Calu3 (cell line): ENCODE measurements at regions of chr6 and their contacts with region 1.

Region 1: GRCh38 chr6:98845211-98846020 is 11.0 kb downstream of the POU3F2 start:
- DNase-seq: peak; percentile 83
- H3K4me3 Mint-ChIP-seq: peak overlapping the region; percentile 68
- H3K27ac Mint-ChIP-seq: no peak overlapping the region
- H3K4me1 Mint-ChIP-seq: peaks cover 8% of the 10 kb centered on the region
- H3K27me3 Mint-ChIP-seq: peaks cover 58% of the 10 kb centered on the region
- CTCF ChIP-seq: peak; percentile 76

Region 2: GRCh38 chr6:97497713-97498331 is 1347.6 kb before region 1 on chr6:
- CTCF ChIA-PET with region 1: no interaction called
- intact Hi-C with region 1: loop called (anchors 5 kb)
- DNase-seq: peak; percentile 65
- H3K4me3 Mint-ChIP-seq: no peak overlapping the region
- H3K27ac Mint-ChIP-seq: no peak overlapping the region
- H3K4me1 Mint-ChIP-seq: no peaks in the 10 kb centered on the region
- H3K27me3 Mint-ChIP-seq: no peaks in the 10 kb centered on the region
- CTCF ChIP-seq: peak; percentile 70

Region 3: DNA sequence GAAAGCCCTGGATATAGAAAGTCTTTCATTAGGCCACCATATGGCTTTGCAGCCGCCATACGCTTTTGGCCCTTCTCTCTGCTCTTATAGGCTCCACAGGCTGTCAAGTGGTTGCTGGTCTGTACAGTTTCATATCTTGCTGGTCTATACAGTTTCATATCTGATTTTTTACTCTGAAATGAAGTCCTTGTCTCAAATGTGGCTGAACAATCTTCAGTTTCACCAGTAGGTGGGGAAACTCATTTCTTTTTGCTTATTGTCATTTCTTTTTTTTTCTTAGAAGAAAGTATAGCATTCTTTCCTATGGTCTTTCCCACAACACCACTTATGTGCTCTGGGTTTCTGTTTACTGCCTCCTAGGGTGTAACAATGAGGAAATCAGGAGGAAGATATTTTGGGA is 791.0 kb before region 1 on chr6:
- CTCF ChIA-PET with region 1: no interaction called
- intact Hi-C with region 1: loop called (anchors 5 kb)
- DNase-seq: no peak
- H3K4me3 Mint-ChIP-seq: no peak overlapping the region
- H3K27ac Mint-ChIP-seq: no peak overlapping the region
- H3K4me1 Mint-ChIP-seq: no peaks in the 10 kb centered on the region
- H3K27me3 Mint-ChIP-seq: no peaks in the 10 kb centered on the region
- CTCF ChIP-seq: no peak

Region 4: GRCh38 chr6:98769544-98769943 is 75.9 kb before region 1 on chr6:
- CTCF ChIA-PET with region 1: interaction called, 3 read pairs
- intact Hi-C with region 1: loop called (anchors 1 kb)
- DNase-seq: peak; percentile 64
- H3K4me3 Mint-ChIP-seq: no peak overlapping the region
- H3K27ac Mint-ChIP-seq: no peak overlapping the region
- H3K4me1 Mint-ChIP-seq: peaks cover 5% of the 10 kb centered on the region
- H3K27me3 Mint-ChIP-seq: peaks cover 6% of the 10 kb centered on the region
- CTCF ChIP-seq: no peak

Region 5: DNA sequence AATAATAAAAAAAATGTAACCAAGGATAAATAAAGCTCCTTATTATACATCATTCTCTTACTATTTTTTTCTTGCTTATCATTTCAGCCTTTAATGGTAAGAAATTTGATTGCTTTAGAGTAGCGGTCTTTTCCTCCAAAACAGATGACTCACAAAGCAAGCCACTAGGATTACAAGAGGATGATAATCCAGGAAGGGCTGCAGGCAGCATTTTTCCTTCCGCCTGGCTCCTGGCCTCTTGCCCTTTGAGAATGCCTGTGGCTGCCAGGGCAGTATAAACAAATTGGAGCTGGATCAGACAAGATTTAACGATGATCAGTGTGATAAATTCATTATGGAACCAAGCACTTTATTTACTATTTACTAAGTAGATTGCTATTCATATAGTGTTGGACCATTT is 112.0 kb after region 1 on chr6:
- CTCF ChIA-PET with region 1: no interaction called
- intact Hi-C with region 1: no loop called
- DNase-seq: peak; percentile 57
- H3K4me3 Mint-ChIP-seq: no peak overlapping the region
- H3K27ac Mint-ChIP-seq: no peak overlapping the region
- H3K4me1 Mint-ChIP-seq: peaks cover 9% of the 10 kb centered on the region
- H3K27me3 Mint-ChIP-seq: no peaks in the 10 kb centered on the region
- CTCF ChIP-seq: no peak

Region 6: GRCh38 chr6:99241905-99242534 is 396.6 kb after region 1 on chr6:
- CTCF ChIA-PET with region 1: no interaction called
- intact Hi-C with region 1: loop called (anchors 10 kb)
- DNase-seq: peak; percentile 53
- H3K4me3 Mint-ChIP-seq: no peak overlapping the region
- H3K27ac Mint-ChIP-seq: no peak overlapping the region
- H3K4me1 Mint-ChIP-seq: no peaks in the 10 kb centered on the region
- H3K27me3 Mint-ChIP-seq: peaks cover 50% of the 10 kb centered on the region
- CTCF ChIP-seq: no peak